CD8-positive, alpha-beta T cell (primary cell): ENCODE measurements at regions of chr6 and their contacts with region 1.

Region 1: GRCh38 chr6:108074359-108075144 is at the start of gene OSTM1:
- DNase-seq: peak; percentile 89 to 97 (median 94)
- ATAC-seq: peak; percentile 96
- H3K4me3 ChIP-seq: peak within 1 kb of the TSS; percentile 98 to 99
- H3K4me3 Mint-ChIP-seq: peak within 1 kb of the TSS; percentile 89
- H3K27ac ChIP-seq: peak within 1 kb of the TSS; percentile 85 to 88
- H3K27ac Mint-ChIP-seq: peak within 1 kb of the TSS; percentile 88
- H3K4me1 ChIP-seq: peaks cover 19% of the 10 kb centered on the region
- H3K4me1 Mint-ChIP-seq: peaks cover 29% of the 10 kb centered on the region
- H3K27me3 ChIP-seq: no peaks in the 10 kb centered on the region
- H3K27me3 Mint-ChIP-seq: peaks cover 2% of the 10 kb centered on the region
- CTCF ChIP-seq: no peak
- total RNA-seq, gene OSTM1: 20.0 to 25.0 TPM

Region 2: GRCh38 chr6:107026965-107027364 is 1047.6 kb before region 1 on chr6:
- CTCF ChIA-PET with region 1: no interaction called
- POLR2A ChIA-PET with region 1: no interaction called
- intact Hi-C with region 1: loop called (anchors 5 kb)
- DNase-seq: no peak
- ATAC-seq: no peak
- H3K4me3 ChIP-seq: no peak overlapping the region
- H3K4me3 Mint-ChIP-seq: peak overlapping the region; percentile 96
- H3K27ac ChIP-seq: no peak overlapping the region
- H3K27ac Mint-ChIP-seq: peak overlapping the region; percentile 38
- H3K4me1 ChIP-seq: peaks cover 10% of the 10 kb centered on the region
- H3K4me1 Mint-ChIP-seq: peaks cover 28% of the 10 kb centered on the region
- H3K27me3 ChIP-seq: no peaks in the 10 kb centered on the region
- H3K27me3 Mint-ChIP-seq: no peaks in the 10 kb centered on the region
- CTCF ChIP-seq: no peak